Endothelial cell of umbilical vein (primary cell): ENCODE measurements at regions of chr10 and their contacts with region 1.

Region 1: GRCh38 chr10:30671026-30671616 is 41.6 kb upstream of the LYZL2 start:
- DNase-seq: peak; percentile 90
- H3K4me3 ChIP-seq: peak overlapping the region in 1 of 3 experiments; percentile 44
- H3K27ac ChIP-seq: no peak overlapping the region
- H3K4me1 ChIP-seq: peaks cover 15% of the 10 kb centered on the region
- H3K27me3 ChIP-seq: no peaks in the 10 kb centered on the region
- CTCF ChIP-seq: peak; percentile 62
- POLR2A ChIP-seq: no peak

Region 2: DNA sequence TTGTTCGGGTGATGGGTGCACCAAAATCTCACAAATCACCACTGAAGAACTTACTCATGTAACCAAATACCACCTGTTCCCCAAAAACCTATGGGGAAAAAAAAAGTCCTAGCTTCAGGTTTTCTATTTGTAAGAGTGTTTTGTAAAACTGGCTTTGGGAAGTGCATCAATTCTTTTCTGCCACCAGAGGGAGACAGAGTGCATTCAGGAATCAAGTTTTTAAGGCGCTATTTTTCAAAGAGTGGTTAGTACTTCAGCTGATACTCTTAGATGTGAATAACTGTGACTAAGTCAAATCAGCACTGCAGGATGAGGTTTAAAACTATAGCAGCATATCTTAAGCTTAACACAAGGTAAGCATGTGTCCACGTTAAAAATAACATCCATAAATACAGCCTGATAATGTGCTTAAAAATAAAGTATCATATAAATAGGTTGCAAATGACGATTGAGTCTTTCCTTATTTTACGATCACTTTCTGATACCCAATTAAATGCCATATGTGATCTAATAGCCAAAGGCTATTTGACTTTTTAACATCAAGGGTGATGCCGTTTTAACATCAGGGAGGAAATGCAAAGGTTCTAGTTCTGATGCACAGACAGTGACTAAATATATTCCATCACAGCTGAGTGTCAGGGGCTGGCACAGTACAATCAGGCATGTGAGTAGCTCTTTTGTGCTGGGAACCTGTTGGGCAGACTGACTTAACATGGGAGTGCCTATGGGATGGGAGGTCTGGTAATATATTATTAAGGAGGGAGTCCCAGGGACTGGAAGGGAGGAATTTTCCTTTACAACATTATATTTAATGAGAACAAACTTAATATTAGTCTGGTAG is 31.0 kb before region 1 on chr10:
- CTCF ChIA-PET with region 1: interaction called, 94 read pairs
- POLR2A ChIA-PET with region 1: no interaction called
- dilution Hi-C with region 1: no loop called
- intact Hi-C with region 1: loop called (anchors 1 kb)
- DNase-seq: peak; percentile 86
- H3K4me3 ChIP-seq: no peak overlapping the region
- H3K27ac ChIP-seq: peak overlapping the region; percentile 44
- H3K4me1 ChIP-seq: peaks cover 61% of the 10 kb centered on the region
- H3K27me3 ChIP-seq: peaks cover 0 to 1% of the 10 kb centered on the region in 2 experiments
- CTCF ChIP-seq: peak; percentile 64 to 70
- POLR2A ChIP-seq: no peak

Region 3: GRCh38 chr10:30645340-30645827 is 25.7 kb before region 1 on chr10:
- CTCF ChIA-PET with region 1: interaction called, 94 read pairs
- POLR2A ChIA-PET with region 1: no interaction called
- dilution Hi-C with region 1: no loop called
- intact Hi-C with region 1: loop called (anchors 1 kb)
- DNase-seq: peak; percentile 77
- H3K4me3 ChIP-seq: no peak overlapping the region
- H3K27ac ChIP-seq: peak overlapping the region; percentile 89
- H3K4me1 ChIP-seq: peaks cover 60% of the 10 kb centered on the region
- H3K27me3 ChIP-seq: no peaks in the 10 kb centered on the region
- CTCF ChIP-seq: no peak
- POLR2A ChIP-seq: no peak

Region 4: GRCh38 chr10:30701451-30702173 is 30.5 kb after region 1 on chr10:
- CTCF ChIA-PET with region 1: interaction called, 10 read pairs
- POLR2A ChIA-PET with region 1: no interaction called
- dilution Hi-C with region 1: no loop called
- intact Hi-C with region 1: no loop called
- DNase-seq: no peak
- H3K4me3 ChIP-seq: no peak overlapping the region
- H3K27ac ChIP-seq: no peak overlapping the region
- H3K4me1 ChIP-seq: no peaks in the 10 kb centered on the region
- H3K27me3 ChIP-seq: peaks cover 4 to 18% of the 10 kb centered on the region in 2 experiments
- CTCF ChIP-seq: no peak
- POLR2A ChIP-seq: no peak